ENCODE measurements at regions of chr16 and their contacts with region 1.

Region 1: DNA sequence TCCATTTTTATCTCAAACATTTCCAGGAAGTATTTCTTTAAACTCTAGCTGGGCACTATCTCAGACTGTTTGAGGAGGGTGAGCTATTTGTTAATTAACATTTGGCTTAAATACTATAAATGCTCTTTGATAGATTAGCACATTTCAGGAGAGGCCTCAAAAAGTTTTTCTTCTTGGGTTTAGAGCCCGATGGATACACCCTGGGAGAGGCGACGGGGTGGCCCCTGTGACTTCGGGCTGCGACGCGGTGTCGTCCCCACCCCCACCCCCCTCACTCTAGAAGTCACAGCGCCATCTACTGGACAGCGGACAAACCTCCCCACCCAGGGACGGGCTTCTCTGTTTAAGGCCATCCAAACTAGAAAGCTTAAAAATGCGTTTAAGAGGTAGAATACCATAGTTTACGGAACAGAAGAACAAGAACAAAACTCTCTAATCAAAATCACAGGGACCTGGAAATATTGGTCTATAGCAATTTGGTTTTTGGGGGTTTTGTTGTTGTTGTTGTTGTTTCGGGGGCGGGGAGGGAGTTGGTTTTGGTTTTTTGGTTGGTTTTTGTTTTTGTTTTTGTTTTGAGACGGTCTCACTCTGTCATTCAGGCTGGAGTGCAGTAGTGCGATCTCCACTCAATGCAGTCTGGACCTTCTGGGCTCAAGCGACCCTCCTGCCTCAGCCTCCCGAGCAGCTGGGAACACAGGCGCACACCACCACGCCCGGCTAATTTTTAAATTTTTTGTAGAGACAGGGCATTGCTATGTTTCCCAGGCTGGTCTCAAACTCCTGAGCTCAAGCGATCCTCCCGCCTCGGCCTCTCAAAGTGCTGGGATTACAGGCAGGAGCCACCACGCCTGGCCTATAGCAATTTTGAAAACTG is 254.4 kb downstream of the C16orf95 start:
- DNase-seq: peak; percentile 69
- H3K4me3 Mint-ChIP-seq: no peak overlapping the region
- H3K27ac Mint-ChIP-seq: no peak overlapping the region
- H3K4me1 Mint-ChIP-seq: no peaks in the 10 kb centered on the region
- H3K27me3 Mint-ChIP-seq: peaks cover 39% of the 10 kb centered on the region

Region 2: GRCh38 chr16:86151239-86151851 is 911.5 kb before region 1 on chr16:
- CTCF ChIA-PET with region 1: no interaction called
- DNase-seq: no peak
- H3K4me3 Mint-ChIP-seq: no peak overlapping the region
- H3K27ac Mint-ChIP-seq: no peak overlapping the region
- H3K4me1 Mint-ChIP-seq: no peaks in the 10 kb centered on the region
- H3K27me3 Mint-ChIP-seq: peaks cover 4% of the 10 kb centered on the region

Region 3: DNA sequence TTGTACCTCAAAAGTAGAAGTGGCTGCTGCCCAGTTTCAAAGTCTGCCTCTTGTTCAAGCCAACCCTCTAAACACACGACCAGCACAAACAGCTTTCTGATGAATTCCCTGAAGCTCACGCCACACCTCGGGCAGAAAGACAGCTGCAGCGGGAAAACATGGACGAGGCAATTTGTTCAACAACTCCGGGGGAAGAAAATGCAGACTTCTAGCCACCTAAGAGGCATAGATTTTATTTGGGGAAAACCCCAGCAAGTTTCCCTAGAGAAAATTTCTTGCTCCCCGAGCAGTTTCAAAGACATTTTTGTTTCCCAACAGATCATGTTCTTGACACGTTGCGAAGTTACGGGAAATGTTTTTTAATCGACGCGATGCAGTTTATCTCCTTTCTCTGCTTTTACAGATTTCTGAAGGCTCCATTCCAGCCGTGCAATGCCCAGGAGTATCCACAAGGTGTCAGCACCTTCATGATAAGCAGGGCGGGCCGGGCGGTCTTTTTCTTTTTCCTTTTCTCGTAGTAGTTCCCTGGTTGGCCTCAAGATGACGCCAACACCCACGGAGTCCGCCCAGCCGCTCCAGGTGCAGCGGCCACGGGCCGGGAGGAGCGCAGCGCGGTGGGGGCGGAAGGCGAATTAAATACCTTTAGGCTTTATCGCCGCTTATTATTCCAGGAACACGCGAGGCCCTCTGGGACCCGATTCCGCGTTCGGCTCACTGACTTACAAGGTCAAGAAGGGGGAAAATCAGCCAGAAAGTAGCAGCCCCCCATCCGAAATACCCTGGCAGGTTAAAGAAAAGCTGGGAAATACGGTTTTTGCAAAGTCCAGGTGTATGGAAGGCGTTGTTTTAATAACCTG is 499.1 kb before region 1 on chr16:
- CTCF ChIA-PET with region 1: interaction called, 19 read pairs
- DNase-seq: peak; percentile 92
- H3K4me3 Mint-ChIP-seq: peak overlapping the region; percentile 21
- H3K27ac Mint-ChIP-seq: no peak overlapping the region
- H3K4me1 Mint-ChIP-seq: peaks cover 8% of the 10 kb centered on the region
- H3K27me3 Mint-ChIP-seq: peaks cover 71% of the 10 kb centered on the region

Region 4: GRCh38 chr16:87043231-87044031 is 19.4 kb before region 1 on chr16:
- CTCF ChIA-PET with region 1: interaction called, 10 read pairs
- DNase-seq: no peak
- H3K4me3 Mint-ChIP-seq: no peak overlapping the region
- H3K27ac Mint-ChIP-seq: no peak overlapping the region
- H3K4me1 Mint-ChIP-seq: no peaks in the 10 kb centered on the region
- H3K27me3 Mint-ChIP-seq: peaks cover 4% of the 10 kb centered on the region

Region 5: GRCh38 chr16:87077750-87078127 is 14.9 kb after region 1 on chr16:
- CTCF ChIA-PET with region 1: interaction called, 11 read pairs
- DNase-seq: no peak
- H3K4me3 Mint-ChIP-seq: no peak overlapping the region
- H3K27ac Mint-ChIP-seq: no peak overlapping the region
- H3K4me1 Mint-ChIP-seq: no peaks in the 10 kb centered on the region
- H3K27me3 Mint-ChIP-seq: no peaks in the 10 kb centered on the region

Region 6: DNA sequence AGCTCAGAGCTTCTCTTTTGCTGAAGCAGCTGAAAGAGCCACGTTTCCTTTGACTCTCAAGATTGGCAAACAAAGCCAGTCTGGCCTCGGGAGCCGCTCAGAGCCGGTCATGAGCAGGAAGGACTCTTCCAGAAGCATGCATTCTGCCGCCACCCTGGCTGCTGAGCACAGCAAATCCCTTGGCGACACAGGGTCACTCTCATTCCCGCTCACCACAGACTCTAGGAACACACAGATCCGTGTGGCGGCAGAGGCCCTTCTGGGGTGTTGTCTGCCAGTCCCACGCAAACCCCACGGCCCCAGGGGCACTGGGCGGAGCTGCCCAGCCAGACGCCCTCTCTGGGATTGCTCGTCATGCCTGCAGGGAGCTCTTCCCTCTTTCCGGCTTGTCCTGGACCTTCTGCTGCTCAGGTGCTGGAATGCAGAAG is 97.4 kb after region 1 on chr16:
- CTCF ChIA-PET with region 1: no interaction called
- DNase-seq: no peak
- H3K4me3 Mint-ChIP-seq: no peak overlapping the region
- H3K27ac Mint-ChIP-seq: no peak overlapping the region
- H3K4me1 Mint-ChIP-seq: no peaks in the 10 kb centered on the region
- H3K27me3 Mint-ChIP-seq: peaks cover 4% of the 10 kb centered on the region

Measured in activated naive CD4-positive, alpha-beta T cell treated with anti-CD3 and anti-CD28 coated beads, Interleukin-2, amount 10 ng/mL, durations not matched to agents 7 days and 5 days (primary cell).